SK-N-SH (cell line): ENCODE measurements at regions of chr11 and their contacts with region 1.

Region 1: GRCh38 chr11:90204832-90205646 is 17.8 kb downstream of the CHORDC1 start:
- DNase-seq: peak; percentile 34
- H3K4me3 ChIP-seq: no peak overlapping the region; a peak in 1 of 4 replicates
- H3K27ac ChIP-seq: peak overlapping the region; percentile 22 to 46; a peak in 3 of 4 replicates
- H3K4me1 ChIP-seq: peaks cover 3 to 6% of the 10 kb centered on the region in 2 experiments; a peak in 3 of 4 replicates
- H3K27me3 ChIP-seq: no peaks in the 10 kb centered on the region
- CTCF ChIP-seq: peak; percentile 96
- EP300 ChIP-seq: no peak
- RAD21 ChIP-seq: peak; percentile 64

Region 2: GRCh38 chr11:90171359-90171758 is 33.7 kb before region 1 on chr11:
- CTCF ChIA-PET with region 1: interaction called, 10 read pairs
- POLR2A ChIA-PET with region 1: no interaction called
- DNase-seq: no peak
- H3K4me3 ChIP-seq: no peak overlapping the region
- H3K27ac ChIP-seq: no peak overlapping the region
- H3K4me1 ChIP-seq: peaks cover 0 to 4% of the 10 kb centered on the region in 2 experiments; a peak in 1 of 4 replicates
- H3K27me3 ChIP-seq: no peaks in the 10 kb centered on the region
- CTCF ChIP-seq: no peak
- EP300 ChIP-seq: no peak
- RAD21 ChIP-seq: no peak

Region 3: GRCh38 chr11:90178760-90179159 is 26.3 kb before region 1 on chr11:
- CTCF ChIA-PET with region 1: interaction called, 10 read pairs
- POLR2A ChIA-PET with region 1: no interaction called
- DNase-seq: no peak
- H3K4me3 ChIP-seq: no peak overlapping the region
- H3K27ac ChIP-seq: no peak overlapping the region
- H3K4me1 ChIP-seq: peaks cover 0 to 4% of the 10 kb centered on the region in 2 experiments; a peak in 1 of 4 replicates
- H3K27me3 ChIP-seq: no peaks in the 10 kb centered on the region
- CTCF ChIP-seq: no peak
- EP300 ChIP-seq: no peak
- RAD21 ChIP-seq: no peak

Region 4: DNA sequence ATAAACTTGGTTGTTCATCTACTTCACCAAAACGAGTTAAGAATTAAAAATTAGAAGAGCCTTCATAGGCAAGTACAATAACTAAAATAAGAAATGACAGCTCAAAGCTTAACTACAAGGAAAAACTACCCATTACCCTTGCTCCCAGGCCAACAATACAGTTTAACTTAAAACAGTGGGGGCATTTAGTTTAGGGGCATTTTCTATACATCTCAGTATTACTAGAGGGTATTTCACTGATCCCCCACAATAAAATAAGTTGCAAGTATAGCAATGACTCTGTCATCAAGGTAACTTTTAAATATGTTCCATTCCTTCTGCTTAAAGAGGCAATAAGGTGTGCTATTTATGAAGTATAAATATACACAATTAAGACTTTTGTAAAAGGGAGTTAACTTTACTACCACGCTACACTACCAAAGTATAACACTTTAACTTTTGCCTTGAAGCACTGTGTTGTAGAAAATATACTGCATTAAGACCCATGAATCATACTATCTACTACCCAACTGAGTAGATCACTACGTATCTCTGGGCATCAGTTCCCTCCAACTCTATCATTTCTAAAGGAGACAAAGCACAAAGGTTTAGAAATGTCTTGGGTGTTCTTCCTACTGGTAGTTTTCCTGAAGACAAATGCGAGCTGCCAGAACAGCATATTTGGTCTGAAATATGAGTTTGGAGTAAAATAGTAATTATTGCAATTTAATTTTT is 12.0 kb before region 1 on chr11:
- CTCF ChIA-PET with region 1: interaction called, 19 read pairs
- POLR2A ChIA-PET with region 1: no interaction called
- DNase-seq: no peak
- H3K4me3 ChIP-seq: no peak overlapping the region
- H3K27ac ChIP-seq: no peak overlapping the region
- H3K4me1 ChIP-seq: no peaks in the 10 kb centered on the region; a peak in 2 of 4 replicates
- H3K27me3 ChIP-seq: no peaks in the 10 kb centered on the region
- CTCF ChIP-seq: no peak
- EP300 ChIP-seq: no peak
- RAD21 ChIP-seq: no peak

Region 5: GRCh38 chr11:90222459-90223247 is 17.6 kb after region 1 on chr11 and contains the start of gene CHORDC1:
- CTCF ChIA-PET with region 1: interaction called, 47 read pairs
- POLR2A ChIA-PET with region 1: no interaction called
- DNase-seq: peak; percentile 91
- H3K4me3 ChIP-seq: peak within 1 kb of the TSS; percentile 81 to 96
- H3K27ac ChIP-seq: peak within 1 kb of the TSS; percentile 84 to 85
- H3K4me1 ChIP-seq: peaks cover 5 to 9% of the 10 kb centered on the region in 2 experiments; a peak in 3 of 4 replicates
- H3K27me3 ChIP-seq: no peaks in the 10 kb centered on the region
- CTCF ChIP-seq: no peak
- EP300 ChIP-seq: peak in 1 of 2 experiments; percentile 84; a peak in 2 of 4 replicates
- RAD21 ChIP-seq: no peak
- polyA plus RNA-seq, gene CHORDC1: 12.1 and 14.0 TPM in 2 replicates